ENCODE measurements at regions of chr22 and their contacts with region 1.

Region 1: DNA sequence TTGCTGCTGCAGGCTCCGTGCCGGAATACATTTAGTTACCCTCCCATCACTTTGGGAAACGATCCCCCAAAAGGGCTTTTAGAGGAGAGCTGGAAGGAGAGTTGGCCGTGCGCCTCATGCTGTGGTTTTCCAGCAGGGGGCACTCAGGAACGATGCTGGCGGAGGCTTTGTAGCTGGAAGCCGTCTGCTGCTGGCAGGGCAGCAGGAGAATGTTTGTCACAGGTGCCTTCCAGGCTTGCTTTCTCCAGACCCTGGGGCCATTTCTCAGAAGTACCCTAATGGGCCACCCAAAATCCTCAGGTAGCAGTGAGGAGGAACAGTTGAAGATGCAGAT is 30.0 kb upstream of the CABP7 start:
- DNase-seq: peak; percentile 29 to 53
- H3K4me3 ChIP-seq: no peak overlapping the region
- H3K27ac ChIP-seq: no peak overlapping the region
- H3K4me1 ChIP-seq: no peaks in the 10 kb centered on the region
- H3K27me3 ChIP-seq: no peaks in the 10 kb centered on the region
- CTCF ChIP-seq: peak; percentile 27 to 51 (median 40)
- POLR2A ChIP-seq: no peak

Region 2: DNA sequence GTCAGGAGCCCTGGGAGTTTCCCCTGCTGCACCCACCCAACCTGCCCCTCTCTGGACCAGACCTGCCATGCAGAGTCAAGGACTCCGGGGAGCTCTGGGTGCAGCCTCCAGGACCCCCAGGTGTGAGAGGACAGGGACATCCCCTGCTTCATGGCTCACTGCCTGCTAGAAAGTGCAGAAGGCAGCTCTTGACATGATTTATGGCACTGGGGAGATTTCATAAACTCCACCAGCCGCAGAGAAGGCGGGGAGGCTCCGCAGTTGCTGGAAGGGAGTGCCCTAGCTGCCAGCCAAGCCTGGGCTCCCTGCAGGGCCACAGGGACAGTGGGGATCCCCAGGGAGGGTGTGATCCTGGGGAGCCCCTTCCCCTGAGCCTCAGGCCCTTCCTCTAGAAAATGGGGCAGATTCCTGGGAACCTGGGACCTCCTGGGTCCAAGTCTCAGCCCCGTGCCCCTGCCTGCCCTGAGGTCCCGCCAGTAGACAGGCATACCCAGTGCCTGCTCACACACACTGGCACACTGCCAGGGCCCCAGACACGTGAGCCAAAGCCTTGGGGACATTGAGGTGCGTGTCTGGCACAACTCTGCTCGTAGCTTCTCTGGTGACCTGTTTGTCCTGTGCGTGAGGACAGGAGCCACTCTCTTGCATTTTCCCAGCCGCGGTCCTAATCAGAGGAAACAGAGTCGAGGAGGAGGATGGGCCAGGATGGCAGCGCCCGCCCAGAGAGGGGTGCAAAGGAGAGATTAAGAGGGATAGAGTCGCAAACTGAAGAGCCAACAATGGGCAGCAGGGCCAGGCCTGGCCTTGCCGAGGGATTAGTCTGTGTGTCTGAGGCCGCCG is 43.7 kb after region 1 on chr22:
- intact Hi-C with region 1: no loop called
- DNase-seq: no peak
- H3K4me3 ChIP-seq: no peak overlapping the region
- H3K27ac ChIP-seq: no peak overlapping the region
- H3K4me1 ChIP-seq: no peaks in the 10 kb centered on the region
- H3K27me3 ChIP-seq: no peaks in the 10 kb centered on the region
- CTCF ChIP-seq: no peak
- POLR2A ChIP-seq: no peak

Region 3: DNA sequence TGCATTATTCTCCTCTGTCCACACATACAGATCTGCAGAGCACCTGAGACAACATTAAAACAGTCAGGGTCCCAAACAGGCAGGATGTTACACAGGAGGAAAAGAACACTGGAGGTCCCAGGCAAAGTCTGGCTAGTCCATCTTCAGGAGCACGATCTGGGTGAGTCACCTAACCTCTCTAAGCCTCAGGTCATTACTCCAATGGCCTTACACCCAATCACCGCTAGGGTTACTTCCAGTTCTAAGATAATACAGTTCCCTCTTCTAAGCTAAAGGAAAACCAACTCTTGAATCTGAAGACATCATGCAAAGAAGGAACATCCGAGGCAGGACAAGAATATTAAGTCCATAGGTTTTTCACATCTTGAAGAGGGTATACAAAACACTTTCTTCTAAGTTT is 123.7 kb after region 1 on chr22:
- intact Hi-C with region 1: no loop called
- DNase-seq: no peak
- H3K4me3 ChIP-seq: no peak overlapping the region
- H3K27ac ChIP-seq: no peak overlapping the region
- H3K4me1 ChIP-seq: no peaks in the 10 kb centered on the region
- H3K27me3 ChIP-seq: no peaks in the 10 kb centered on the region
- CTCF ChIP-seq: no peak
- POLR2A ChIP-seq: no peak

Region 4: DNA sequence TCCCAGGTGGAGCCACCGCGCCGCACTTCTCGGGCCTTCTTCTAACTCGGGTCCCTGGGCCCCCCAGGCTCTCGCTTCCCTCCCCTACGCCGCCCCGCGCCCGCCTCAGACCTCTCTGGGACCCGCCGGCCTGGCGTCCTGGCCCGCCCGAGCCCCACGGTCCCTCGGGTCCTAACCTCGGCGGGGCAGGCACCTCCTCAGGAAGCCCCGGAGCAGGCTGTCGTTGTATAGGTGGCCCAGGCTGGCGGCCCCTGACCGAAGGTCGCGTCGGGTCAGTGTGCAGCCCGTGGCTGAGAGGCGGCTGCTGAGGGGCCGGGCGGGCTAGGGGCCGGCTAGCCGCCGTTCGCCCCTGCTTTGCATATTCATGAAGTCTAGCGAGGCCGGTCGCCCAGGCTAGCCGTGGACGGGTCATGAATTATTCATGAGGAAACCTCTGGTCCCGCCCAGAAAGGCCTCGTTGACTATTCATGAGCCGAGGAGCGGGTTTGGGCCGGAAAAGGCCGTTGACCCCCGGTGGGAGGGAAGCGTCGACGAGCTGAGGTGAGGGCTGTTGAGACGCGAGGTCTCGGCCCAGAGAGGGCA is 390.2 kb after region 1 on chr22 and contains the start of gene HORMAD2:
- intact Hi-C with region 1: loop called (anchors 10 kb)
- DNase-seq: no peak
- H3K4me3 ChIP-seq: no peak within 1 kb of the TSS
- H3K27ac ChIP-seq: no peak within 1 kb of the TSS
- H3K4me1 ChIP-seq: no peaks in the 10 kb centered on the region
- H3K27me3 ChIP-seq: no peaks in the 10 kb centered on the region
- CTCF ChIP-seq: no peak
- POLR2A ChIP-seq: no peak
- total RNA-seq, gene HORMAD2: not detected

Measured in uterus (tissue), 4 donors.